AG04450 (cell line): ENCODE measurements at regions of chr5 and their contacts with region 1.

Region 1: GRCh38 chr5:44332285-44332971 is 56.8 kb downstream of the FGF10 start:
- DNase-seq: peak; percentile 21
- H3K4me3 ChIP-seq: no peak overlapping the region
- H3K27ac ChIP-seq: no peak overlapping the region
- H3K27me3 ChIP-seq: no peaks in the 10 kb centered on the region
- CTCF ChIP-seq: peak; percentile 66

Region 2: DNA sequence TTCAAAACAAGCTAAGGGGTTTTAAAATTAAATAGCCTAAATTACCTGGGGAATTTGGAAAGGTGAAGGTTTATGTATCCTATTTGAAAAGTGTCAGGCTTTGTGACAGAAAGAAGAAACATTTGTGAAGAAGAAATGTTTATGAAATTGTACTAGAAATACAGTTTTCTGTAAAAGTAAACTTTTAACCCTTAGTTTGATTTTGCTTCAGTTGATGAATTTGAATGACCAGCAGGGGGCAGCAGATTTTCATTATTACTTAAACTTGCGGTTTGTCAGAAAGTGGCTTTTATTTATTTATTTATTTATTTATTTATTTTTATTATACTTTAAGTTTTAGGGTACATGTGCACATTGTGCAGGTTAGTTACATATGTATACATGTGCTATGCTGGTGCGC is 671.3 kb before region 1 on chr5:
- CTCF ChIA-PET with region 1: interaction called, 10 read pairs
- POLR2A ChIA-PET with region 1: no interaction called
- DNase-seq: no peak
- H3K4me3 ChIP-seq: no peak overlapping the region
- H3K27ac ChIP-seq: no peak overlapping the region
- H3K27me3 ChIP-seq: no peaks in the 10 kb centered on the region
- CTCF ChIP-seq: peak; percentile 53

Region 3: DNA sequence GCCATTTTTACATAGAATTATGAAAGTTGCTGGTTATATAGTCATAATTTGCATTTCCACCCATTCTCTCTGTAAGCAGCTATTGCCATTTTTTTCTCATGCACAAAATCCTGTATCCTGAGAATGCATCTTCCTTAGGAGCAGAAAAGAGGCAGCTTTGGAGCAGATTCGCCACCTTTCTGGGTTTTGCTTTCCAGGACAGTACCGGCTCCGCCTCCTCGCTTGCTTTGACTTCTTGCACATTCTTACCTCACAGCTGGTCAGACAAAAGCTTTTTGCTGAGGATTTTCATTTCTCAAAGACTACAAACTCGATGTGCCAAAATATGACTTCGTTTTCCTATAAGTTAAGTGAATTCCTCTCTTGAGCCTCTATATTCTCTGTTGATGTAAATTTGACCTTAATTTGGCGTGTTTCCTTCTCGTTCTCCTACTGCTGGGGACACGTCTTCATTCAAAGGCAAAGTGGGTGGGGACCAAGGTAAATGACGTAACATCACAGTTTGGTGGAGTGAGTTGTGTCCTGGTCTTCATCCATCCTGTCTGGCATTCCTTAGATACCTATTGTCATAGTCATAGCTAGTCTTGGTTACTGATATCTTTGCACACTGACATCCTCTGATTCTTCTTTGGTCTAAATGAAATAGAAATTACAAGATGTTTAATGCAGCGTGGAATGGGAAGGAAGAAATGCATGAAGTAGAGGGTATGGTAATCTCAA is 621.1 kb before region 1 on chr5:
- CTCF ChIA-PET with region 1: interaction called, 12 read pairs
- POLR2A ChIA-PET with region 1: interaction called, 3 read pairs
- DNase-seq: no peak
- H3K4me3 ChIP-seq: no peak overlapping the region
- H3K27ac ChIP-seq: no peak overlapping the region
- H3K27me3 ChIP-seq: no peaks in the 10 kb centered on the region
- CTCF ChIP-seq: no peak

Region 4: GRCh38 chr5:43729846-43730478 is 602.5 kb before region 1 on chr5:
- CTCF ChIA-PET with region 1: interaction called, 145 read pairs
- POLR2A ChIA-PET with region 1: no interaction called
- DNase-seq: peak; percentile 3
- H3K4me3 ChIP-seq: no peak overlapping the region
- H3K27ac ChIP-seq: no peak overlapping the region
- H3K27me3 ChIP-seq: no peaks in the 10 kb centered on the region
- CTCF ChIP-seq: peak; percentile 58

Region 5: DNA sequence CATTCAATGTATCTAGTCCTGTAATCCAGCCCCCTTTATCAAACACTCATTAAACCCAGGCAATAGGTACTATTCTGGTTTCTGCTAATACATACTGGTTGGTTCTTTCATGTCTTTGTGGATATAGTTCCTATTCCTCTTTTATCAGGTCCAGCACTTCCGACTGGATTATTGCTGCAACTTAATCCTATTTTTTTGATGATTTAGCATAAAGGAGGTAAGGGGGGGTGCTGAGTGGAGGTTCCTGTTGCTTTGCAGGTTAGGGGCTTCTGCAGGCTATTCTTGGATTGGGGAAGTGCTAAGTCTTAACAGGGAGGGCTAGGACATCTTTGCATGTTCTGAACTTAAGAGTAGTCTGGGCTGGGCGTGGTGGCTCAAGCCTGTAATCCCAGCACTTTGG is 320.9 kb before region 1 on chr5:
- CTCF ChIA-PET with region 1: no interaction called
- POLR2A ChIA-PET with region 1: no interaction called
- DNase-seq: no peak
- H3K4me3 ChIP-seq: no peak overlapping the region
- H3K27ac ChIP-seq: no peak overlapping the region
- H3K27me3 ChIP-seq: no peaks in the 10 kb centered on the region
- CTCF ChIP-seq: no peak

Region 6: GRCh38 chr5:44345871-44346270 is 13.4 kb after region 1 on chr5:
- CTCF ChIA-PET with region 1: interaction called, 20 read pairs
- POLR2A ChIA-PET with region 1: no interaction called
- DNase-seq: no peak
- H3K4me3 ChIP-seq: no peak overlapping the region
- H3K27ac ChIP-seq: no peak overlapping the region
- H3K27me3 ChIP-seq: no peaks in the 10 kb centered on the region
- CTCF ChIP-seq: no peak

Region 7: GRCh38 chr5:44388321-44389089 is 56.1 kb after region 1 on chr5:
- CTCF ChIA-PET with region 1: interaction called, 13 read pairs
- POLR2A ChIA-PET with region 1: no interaction called
- DNase-seq: no peak
- H3K4me3 ChIP-seq: peak overlapping the region; percentile 51
- H3K27ac ChIP-seq: no peak overlapping the region
- H3K27me3 ChIP-seq: peaks cover 18% of the 10 kb centered on the region
- CTCF ChIP-seq: no peak